CD4-positive, alpha-beta memory T cell (primary cell): ENCODE measurements at regions of chr6 and their contacts with region 1.

Region 1: DNA sequence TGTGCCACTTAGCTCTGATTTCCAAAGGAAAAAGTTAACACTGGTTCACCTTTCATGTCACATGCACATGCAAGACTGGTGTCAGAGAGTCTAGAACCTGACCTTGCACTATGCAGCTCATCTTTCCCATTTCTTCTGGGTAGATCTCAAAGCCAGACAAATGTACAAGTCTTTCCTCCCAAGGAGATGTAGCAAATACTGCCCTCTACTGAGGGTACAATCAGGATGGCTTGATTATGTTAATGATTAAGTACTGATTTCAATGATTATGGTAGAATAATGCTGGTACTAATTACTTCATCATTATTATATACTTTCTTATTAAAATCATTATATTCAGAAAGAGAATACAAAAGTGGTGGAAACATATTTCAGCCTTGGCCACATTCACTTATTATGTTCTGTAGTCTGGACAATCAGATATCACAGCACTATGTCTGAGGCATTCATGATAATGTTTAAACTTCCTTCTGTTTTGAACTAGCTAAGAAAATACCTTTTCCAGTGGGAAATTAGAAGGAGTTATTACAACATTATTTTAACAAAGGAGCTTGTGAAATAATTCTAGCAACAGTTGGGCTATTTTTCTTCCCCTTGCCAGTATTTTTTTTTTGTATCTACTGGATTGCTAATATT is 68.5 kb upstream of the FOXO3 start:
- DNase-seq: peak in 4 of 5 donors; percentile 8 to 22 (median 15)
- H3K4me3 ChIP-seq: no peak overlapping the region
- H3K4me3 Mint-ChIP-seq: no peak overlapping the region
- H3K27ac ChIP-seq: no peak overlapping the region
- H3K27ac Mint-ChIP-seq: no peak overlapping the region
- H3K4me1 ChIP-seq: no peaks in the 10 kb centered on the region
- H3K4me1 Mint-ChIP-seq: peaks cover 0 to 1% (median 0%) of the 10 kb centered on the region in 4 donors
- H3K27me3 ChIP-seq: no peaks in the 10 kb centered on the region
- H3K27me3 Mint-ChIP-seq: no peaks in the 10 kb centered on the region

Region 2: DNA sequence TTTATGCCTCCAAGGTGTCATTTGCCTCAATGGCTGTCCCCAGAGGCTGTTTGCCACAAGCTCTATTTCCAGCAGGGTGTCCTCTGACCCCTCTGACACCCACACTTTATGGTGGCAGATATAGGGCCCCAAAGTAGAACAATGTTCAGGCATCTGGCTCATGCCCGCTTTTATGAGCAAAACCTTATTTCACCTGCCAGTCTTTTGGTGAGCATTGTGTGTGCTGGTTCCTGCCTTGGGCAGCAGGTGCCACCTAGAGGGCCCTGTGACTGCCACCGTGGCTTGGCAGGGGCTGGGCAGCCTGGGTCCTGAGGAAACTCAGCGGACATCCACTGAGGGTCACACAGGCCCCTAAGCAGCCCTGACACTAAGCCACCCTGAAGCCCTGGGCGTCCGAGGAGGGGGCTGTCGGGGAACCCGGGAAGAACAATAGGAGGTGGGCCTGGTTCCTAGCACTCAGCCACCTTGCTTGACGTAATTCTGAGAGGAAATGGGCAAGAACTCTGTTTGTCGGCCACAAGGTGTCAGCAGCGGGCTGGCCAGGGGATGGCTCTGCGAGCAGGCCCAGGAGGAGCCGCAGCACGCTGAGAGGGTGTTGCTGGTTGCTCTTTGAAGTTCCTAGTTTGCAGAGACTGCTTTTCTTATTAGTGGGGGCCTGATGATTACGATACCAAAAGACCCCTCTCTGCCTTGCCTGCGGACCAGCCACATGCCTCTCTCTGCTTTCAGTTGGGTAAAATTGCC is 817.1 kb before region 1 on chr6:
- CTCF ChIA-PET with region 1: no interaction called
- POLR2A ChIA-PET with region 1: no interaction called
- intact Hi-C with region 1: loop called (anchors 10 kb)
- DNase-seq: peak; percentile 83 to 86 (median 84)
- H3K4me3 ChIP-seq: peak overlapping the region in 1 of 2 donors; percentile 6
- H3K4me3 Mint-ChIP-seq: peak overlapping the region in 6 of 8 donors; percentile 49 to 81 (median 64)
- H3K27ac ChIP-seq: no peak overlapping the region
- H3K27ac Mint-ChIP-seq: peak overlapping the region; percentile 32 to 92 (median 91)
- H3K4me1 ChIP-seq: peaks cover 17% of the 10 kb centered on the region
- H3K4me1 Mint-ChIP-seq: peaks cover 6 to 14% (median 11%) of the 10 kb centered on the region in 4 donors
- H3K27me3 ChIP-seq: no peaks in the 10 kb centered on the region
- H3K27me3 Mint-ChIP-seq: no peaks in the 10 kb centered on the region

Region 3: GRCh38 chr6:107977283-107977682 is 515.0 kb before region 1 on chr6:
- CTCF ChIA-PET with region 1: interaction called, 5 read pairs
- POLR2A ChIA-PET with region 1: no interaction called
- intact Hi-C with region 1: loop called (anchors 2 kb)
- DNase-seq: no peak
- H3K4me3 ChIP-seq: no peak overlapping the region
- H3K4me3 Mint-ChIP-seq: no peak overlapping the region
- H3K27ac ChIP-seq: no peak overlapping the region
- H3K27ac Mint-ChIP-seq: peak overlapping the region in 1 of 7 donors; percentile 78
- H3K4me1 ChIP-seq: no peaks in the 10 kb centered on the region
- H3K4me1 Mint-ChIP-seq: peaks cover 0 to 6% (median 3%) of the 10 kb centered on the region in 4 donors
- H3K27me3 ChIP-seq: no peaks in the 10 kb centered on the region
- H3K27me3 Mint-ChIP-seq: peaks cover under 1% of the 10 kb centered on the region in 2 donors

Region 4: GRCh38 chr6:108113557-108114519 is 378.4 kb before region 1 on chr6:
- CTCF ChIA-PET with region 1: interaction called, 17 read pairs
- POLR2A ChIA-PET with region 1: no interaction called
- intact Hi-C with region 1: no loop called
- DNase-seq: peak in 2 of 5 donors; percentile 18 to 28
- H3K4me3 ChIP-seq: peak overlapping the region in 1 of 2 donors; percentile 1
- H3K4me3 Mint-ChIP-seq: peak overlapping the region in 7 of 8 donors; percentile 57 to 95 (median 64)
- H3K27ac ChIP-seq: no peak overlapping the region
- H3K27ac Mint-ChIP-seq: no peak overlapping the region
- H3K4me1 ChIP-seq: peaks cover 48% of the 10 kb centered on the region
- H3K4me1 Mint-ChIP-seq: peaks cover 32 to 48% (median 40%) of the 10 kb centered on the region in 4 donors
- H3K27me3 ChIP-seq: peaks cover 62% of the 10 kb centered on the region
- H3K27me3 Mint-ChIP-seq: peaks cover 63 to 67% of the 10 kb centered on the region in 2 donors

Region 5: DNA sequence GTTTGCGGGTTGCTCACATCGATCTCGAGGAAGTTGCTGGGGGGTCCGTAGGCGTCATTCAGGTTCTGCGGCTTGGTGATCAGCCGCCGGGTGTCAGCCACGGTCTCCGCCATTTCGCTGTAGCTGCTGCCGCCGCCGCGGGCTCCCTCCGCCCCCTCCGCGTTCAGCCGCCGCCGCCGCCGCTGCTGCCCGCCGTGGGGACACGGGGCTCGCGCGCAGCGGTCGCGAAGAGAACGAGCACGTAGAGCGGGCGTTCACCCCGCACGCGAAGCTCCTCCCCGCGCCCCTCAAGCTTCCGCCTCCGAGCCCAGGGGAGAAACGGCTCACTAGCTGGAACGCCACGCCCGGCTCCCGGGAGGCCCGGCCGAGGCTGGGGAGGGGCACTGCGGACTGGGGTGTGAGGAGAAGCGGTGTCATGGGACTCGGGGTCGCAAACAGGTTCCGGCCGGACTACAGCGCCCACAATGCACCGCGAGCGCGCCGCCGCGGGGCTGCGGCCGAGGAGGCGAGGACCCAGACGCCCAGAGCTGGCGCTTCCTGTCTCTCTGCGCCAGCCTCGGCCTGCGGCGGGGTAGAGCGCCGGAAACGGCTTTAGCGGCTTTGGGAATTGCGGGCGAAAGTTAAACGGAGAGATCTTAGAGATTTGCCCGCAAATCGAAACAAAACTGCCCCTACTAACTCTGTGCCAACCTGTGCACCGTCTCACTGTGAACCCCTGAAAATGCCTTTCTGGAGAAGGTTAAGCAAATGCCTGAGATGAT is 231.3 kb before region 1 on chr6 and contains the start of gene SNX3:
- CTCF ChIA-PET with region 1: interaction called, 4 read pairs
- POLR2A ChIA-PET with region 1: no interaction called
- intact Hi-C with region 1: loop called (anchors 5 kb)
- DNase-seq: peak; percentile 90 to 94 (median 91)
- H3K4me3 ChIP-seq: peak within 1 kb of the TSS; percentile 93 to 98
- H3K4me3 Mint-ChIP-seq: peak within 1 kb of the TSS; percentile 86 to 97 (median 92)
- H3K27ac ChIP-seq: peak within 1 kb of the TSS; percentile 84
- H3K27ac Mint-ChIP-seq: peak within 1 kb of the TSS; percentile 89 to 97 (median 95)
- H3K4me1 ChIP-seq: peaks cover 43% of the 10 kb centered on the region
- H3K4me1 Mint-ChIP-seq: peaks cover 15 to 38% (median 27%) of the 10 kb centered on the region in 4 donors
- H3K27me3 ChIP-seq: no peaks in the 10 kb centered on the region
- H3K27me3 Mint-ChIP-seq: peaks cover 0 to 2% of the 10 kb centered on the region in 2 donors
- total RNA-seq, gene SNX3: 65.9 to 66.6 TPM

Region 6: DNA sequence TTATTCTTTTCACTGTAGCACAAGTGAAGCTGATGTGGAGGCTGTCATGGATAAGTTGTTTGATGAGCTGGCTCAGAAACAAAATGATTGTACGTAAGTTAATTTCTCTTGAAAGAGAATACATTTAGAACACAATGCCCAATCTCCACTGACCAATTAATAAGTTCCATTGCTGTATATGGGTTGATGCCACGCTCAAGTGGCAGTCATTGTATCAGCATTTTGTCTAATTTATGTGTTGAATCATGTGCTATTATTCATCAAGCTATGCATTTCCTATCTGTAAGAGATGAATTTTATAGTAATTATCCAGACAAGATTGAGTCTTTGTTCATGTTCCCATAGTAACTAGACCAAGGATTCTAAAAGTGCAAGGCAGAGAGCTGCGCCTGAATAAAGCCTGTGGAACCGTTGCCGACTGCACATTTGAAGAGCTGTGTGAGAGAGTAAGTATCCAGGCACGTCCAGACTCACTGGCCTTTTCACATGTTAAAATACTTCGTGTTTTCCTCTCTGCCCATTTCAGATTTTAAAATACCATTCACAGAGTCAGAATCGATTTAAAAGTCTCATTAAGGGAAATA is 15.3 kb before region 1 on chr6:
- CTCF ChIA-PET with region 1: interaction called, 10 read pairs
- POLR2A ChIA-PET with region 1: interaction called, 3 read pairs
- intact Hi-C with region 1: no loop called
- DNase-seq: no peak
- H3K4me3 ChIP-seq: no peak overlapping the region
- H3K4me3 Mint-ChIP-seq: no peak overlapping the region
- H3K27ac ChIP-seq: no peak overlapping the region
- H3K27ac Mint-ChIP-seq: no peak overlapping the region
- H3K4me1 ChIP-seq: no peaks in the 10 kb centered on the region
- H3K4me1 Mint-ChIP-seq: no peaks in the 10 kb centered on the region
- H3K27me3 ChIP-seq: no peaks in the 10 kb centered on the region
- H3K27me3 Mint-ChIP-seq: no peaks in the 10 kb centered on the region

Region 7: GRCh38 chr6:108502832-108503231 is 10.6 kb after region 1 on chr6:
- CTCF ChIA-PET with region 1: interaction called, 17 read pairs
- POLR2A ChIA-PET with region 1: no interaction called
- intact Hi-C with region 1: no loop called
- DNase-seq: no peak
- H3K4me3 ChIP-seq: no peak overlapping the region
- H3K4me3 Mint-ChIP-seq: no peak overlapping the region
- H3K27ac ChIP-seq: no peak overlapping the region
- H3K27ac Mint-ChIP-seq: no peak overlapping the region
- H3K4me1 ChIP-seq: no peaks in the 10 kb centered on the region
- H3K4me1 Mint-ChIP-seq: no peaks in the 10 kb centered on the region
- H3K27me3 ChIP-seq: no peaks in the 10 kb centered on the region
- H3K27me3 Mint-ChIP-seq: no peaks in the 10 kb centered on the region